ENCODE measurements at regions of chr3 and their contacts with region 1.

Region 1: DNA sequence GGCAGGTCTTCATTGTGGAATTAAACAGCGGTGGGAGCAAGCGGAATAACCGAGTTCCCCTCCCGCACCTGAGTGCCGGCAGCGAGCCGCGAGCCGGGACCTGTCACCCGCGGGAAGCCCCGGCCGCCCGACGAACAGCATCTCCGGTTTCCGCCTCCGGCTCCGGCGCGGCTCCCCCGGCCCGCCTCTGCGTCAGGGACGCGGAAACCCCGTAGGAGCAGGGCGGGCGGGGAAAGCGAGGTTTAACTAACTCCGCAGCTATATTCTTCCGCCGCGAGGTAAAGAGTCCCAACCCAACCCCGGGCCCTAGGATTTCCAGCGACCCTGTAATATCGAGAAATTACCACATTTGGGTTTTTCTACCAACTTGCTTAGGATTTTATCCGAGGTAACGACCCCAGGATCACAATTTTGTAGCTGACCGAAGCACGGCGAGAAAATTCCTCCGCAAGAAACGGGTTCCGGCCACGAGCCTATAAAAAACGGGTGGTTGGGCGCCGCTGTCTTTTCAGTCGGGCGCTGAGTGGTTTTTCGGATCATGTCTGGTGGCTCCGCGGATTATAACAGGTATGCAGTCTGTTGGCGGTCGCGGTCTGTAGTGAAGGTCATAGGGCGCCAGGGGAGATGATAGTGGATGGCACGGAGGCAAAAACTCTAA is at the start of gene EIF4A2:
- DNase-seq: peak; percentile 78 to 86
- ATAC-seq: peak; percentile 81 to 88
- H3K4me3 ChIP-seq: peak within 1 kb of the TSS; percentile 63 to 93 (median 86)
- H3K27ac ChIP-seq: peak within 1 kb of the TSS; percentile 88 to 99 (median 96)
- H3K4me1 ChIP-seq: peaks cover 38 to 47% of the 10 kb centered on the region in 2 donors
- H3K27me3 ChIP-seq: no peaks in the 10 kb centered on the region
- CTCF ChIP-seq: peak in 1 of 5 experiments; percentile 28
- POLR2A ChIP-seq: peak; percentile 83 to 95
- total RNA-seq, gene EIF4A2: 531 to 622 (median 574) TPM

Region 2: DNA sequence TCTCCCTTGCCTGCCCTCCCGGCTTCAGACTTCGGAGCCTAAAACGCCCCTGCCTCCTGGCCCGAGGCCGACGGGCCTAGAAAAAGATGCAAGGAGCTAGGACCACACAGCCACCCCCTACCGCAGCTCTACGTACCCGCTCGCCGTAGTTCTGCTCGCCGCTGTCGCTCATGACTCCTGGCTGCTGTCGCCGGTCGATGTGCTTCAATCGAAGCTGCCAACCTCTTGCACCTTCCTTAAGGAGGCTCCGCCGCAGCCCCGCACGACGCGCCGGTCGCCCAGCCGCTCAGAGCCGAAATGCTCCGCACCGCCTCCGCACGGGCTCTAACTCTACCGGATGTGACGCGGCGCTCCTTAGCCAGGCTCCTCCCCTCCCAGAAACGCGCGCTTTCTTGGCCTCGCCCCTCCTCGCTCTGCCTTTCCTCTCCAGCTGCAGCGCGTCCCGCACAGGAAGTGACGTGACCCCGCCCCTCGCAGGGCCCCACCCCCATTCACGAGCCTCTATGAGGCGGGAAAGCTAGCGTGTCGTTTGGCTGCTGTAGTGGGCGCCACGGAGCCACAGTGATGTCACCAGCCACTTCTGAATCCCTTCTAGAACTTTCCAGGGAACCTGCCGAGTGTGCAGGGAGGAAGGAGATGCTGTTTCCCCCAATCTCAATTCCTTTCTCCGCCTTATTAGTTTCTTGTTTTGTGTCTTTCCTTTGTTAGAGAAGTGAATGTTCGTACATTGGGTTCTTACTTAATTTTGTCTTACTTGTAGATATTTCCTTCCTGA is 845.3 kb before region 1 on chr3 and contains the start of gene TRA2B:
- in situ Hi-C with region 1: loop called in 3 of 4 experiments (anchors 25 kb)
- intact Hi-C with region 1: loop called (anchors 2 kb)
- DNase-seq: peak; percentile 99
- ATAC-seq: peak; percentile 93 to 94
- H3K4me3 ChIP-seq: peak within 1 kb of the TSS; percentile 97 to 99 (median 98)
- H3K27ac ChIP-seq: peak within 1 kb of the TSS; percentile 100
- H3K4me1 ChIP-seq: peaks cover 22 to 25% of the 10 kb centered on the region in 2 donors
- H3K27me3 ChIP-seq: no peaks in the 10 kb centered on the region
- CTCF ChIP-seq: no peak
- POLR2A ChIP-seq: peak; percentile 100
- total RNA-seq, gene TRA2B: 57.5 to 234 (median 65.1) TPM

Region 3: DNA sequence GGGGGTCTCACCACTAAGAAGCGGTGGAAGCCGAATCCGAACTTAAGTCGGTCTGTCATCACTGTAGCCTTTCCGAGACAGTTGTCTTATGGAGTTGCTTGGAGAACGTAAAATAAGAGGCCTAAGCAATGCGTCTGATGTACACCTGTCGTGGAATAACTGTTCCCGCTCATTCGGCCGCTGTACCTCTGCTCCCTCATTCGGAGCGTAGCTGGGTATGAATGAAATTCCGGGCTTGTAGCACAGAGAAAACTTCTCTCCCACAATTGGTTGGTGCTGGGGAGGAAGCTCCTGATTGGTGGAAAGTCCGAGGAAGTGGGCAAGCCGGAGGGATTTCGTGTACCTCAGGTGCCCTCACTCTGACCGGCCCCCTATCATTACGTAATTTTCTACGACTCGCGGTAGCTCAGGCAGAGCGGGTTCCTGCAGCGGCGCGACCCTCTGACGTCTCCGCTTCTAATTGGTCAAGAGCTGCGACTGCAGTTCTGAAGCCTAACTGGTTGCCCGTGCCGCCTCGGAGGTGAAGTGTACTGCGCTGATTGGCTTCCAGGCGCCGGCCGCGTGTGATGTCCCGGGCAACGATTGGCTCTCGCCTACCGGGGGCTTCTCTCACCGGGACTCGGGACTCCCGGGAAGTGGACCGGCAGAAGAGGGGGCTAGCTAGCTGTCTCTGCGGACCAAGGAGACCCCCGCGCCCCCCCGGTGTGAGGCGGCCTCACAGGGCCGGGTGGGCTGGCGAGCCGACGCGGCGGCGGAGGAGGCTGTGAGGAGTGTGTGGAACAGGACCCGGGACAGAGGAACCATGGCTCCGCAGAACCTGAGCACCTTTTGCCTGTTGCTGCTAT is 212.9 kb before region 1 on chr3 and contains the start of gene DNAJB11:
- in situ Hi-C with region 1: loop called in 1 of 4 experiments (anchors 25 kb)
- intact Hi-C with region 1: loop called (anchors 2 kb)
- DNase-seq: peak; percentile 99
- ATAC-seq: peak; percentile 90 to 96
- H3K4me3 ChIP-seq: peak within 1 kb of the TSS; percentile 81 to 99 (median 93)
- H3K27ac ChIP-seq: peak within 1 kb of the TSS; percentile 90 to 97 (median 94)
- H3K4me1 ChIP-seq: peaks cover 25 to 34% of the 10 kb centered on the region in 2 donors
- H3K27me3 ChIP-seq: no peaks in the 10 kb centered on the region
- CTCF ChIP-seq: no peak
- POLR2A ChIP-seq: peak; percentile 70 to 77
- total RNA-seq, gene DNAJB11: 15.1 to 24.7 (median 23.0) TPM

Region 4: GRCh38 chr3:186976837-186977750 is 193.9 kb after region 1 on chr3:
- in situ Hi-C with region 1: no loop called
- intact Hi-C with region 1: loop called (anchors 5 kb)
- DNase-seq: peak; percentile 95 to 98
- ATAC-seq: peak; percentile 90 to 92
- H3K4me3 ChIP-seq: peak overlapping the region; percentile 28 to 41 (median 37)
- H3K27ac ChIP-seq: peak overlapping the region; percentile 91 to 97 (median 93)
- H3K4me1 ChIP-seq: peaks cover 53 to 57% of the 10 kb centered on the region in 2 donors
- H3K27me3 ChIP-seq: no peaks in the 10 kb centered on the region
- CTCF ChIP-seq: peak in 3 of 5 experiments; percentile 25 to 52 (median 45)
- POLR2A ChIP-seq: peak in 1 of 2 donors; percentile 14

Measured in gastrocnemius medialis (tissue), 4 donors.